OCI-LY7 (cell line): ENCODE measurements at regions of chr19 and their contacts with region 1.

Region 1: GRCh38 chr19:34310471-34310981 is 54.5 kb upstream of the GPI start:
- DNase-seq: peak; percentile 89
- H3K4me3 ChIP-seq: peak overlapping the region; percentile 49
- H3K27ac ChIP-seq: peak overlapping the region; percentile 93
- H3K4me1 ChIP-seq: peaks cover 94% of the 10 kb centered on the region
- CTCF ChIP-seq: no peak

Region 2: GRCh38 chr19:34254552-34255432 is 55.7 kb before region 1 on chr19 and contains the start of gene GARRE1:
- CTCF ChIA-PET with region 1: no interaction called
- POLR2A ChIA-PET with region 1: no interaction called
- intact Hi-C with region 1: loop called (anchors 5 kb)
- DNase-seq: peak; percentile 58
- H3K4me3 ChIP-seq: peak within 1 kb of the TSS; percentile 94
- H3K27ac ChIP-seq: peak within 1 kb of the TSS; percentile 47
- H3K4me1 ChIP-seq: peaks cover 15% of the 10 kb centered on the region
- CTCF ChIP-seq: no peak
- total RNA-seq, gene GARRE1: 11.1 and 15.4 TPM in 2 replicates

Region 3: GRCh38 chr19:34269968-34270621 is 40.4 kb before region 1 on chr19:
- CTCF ChIA-PET with region 1: interaction called, 3 read pairs
- POLR2A ChIA-PET with region 1: interaction called, 16 read pairs
- intact Hi-C with region 1: loop called (anchors 2 kb)
- DNase-seq: peak; percentile 89
- H3K4me3 ChIP-seq: peak overlapping the region; percentile 57
- H3K27ac ChIP-seq: peak overlapping the region; percentile 94
- H3K4me1 ChIP-seq: peaks cover 81% of the 10 kb centered on the region
- CTCF ChIP-seq: no peak

Region 4: GRCh38 chr19:34359140-34359953 is 48.8 kb after region 1 on chr19:
- CTCF ChIA-PET with region 1: no interaction called
- POLR2A ChIA-PET with region 1: no interaction called
- intact Hi-C with region 1: no loop called
- DNase-seq: peak; percentile 84
- H3K4me3 ChIP-seq: peak overlapping the region; percentile 64
- H3K27ac ChIP-seq: no peak overlapping the region
- H3K4me1 ChIP-seq: peaks cover 13% of the 10 kb centered on the region
- CTCF ChIP-seq: peak; percentile 65